ENCODE measurements at regions of chr2 and their contacts with region 1.

Region 1: DNA sequence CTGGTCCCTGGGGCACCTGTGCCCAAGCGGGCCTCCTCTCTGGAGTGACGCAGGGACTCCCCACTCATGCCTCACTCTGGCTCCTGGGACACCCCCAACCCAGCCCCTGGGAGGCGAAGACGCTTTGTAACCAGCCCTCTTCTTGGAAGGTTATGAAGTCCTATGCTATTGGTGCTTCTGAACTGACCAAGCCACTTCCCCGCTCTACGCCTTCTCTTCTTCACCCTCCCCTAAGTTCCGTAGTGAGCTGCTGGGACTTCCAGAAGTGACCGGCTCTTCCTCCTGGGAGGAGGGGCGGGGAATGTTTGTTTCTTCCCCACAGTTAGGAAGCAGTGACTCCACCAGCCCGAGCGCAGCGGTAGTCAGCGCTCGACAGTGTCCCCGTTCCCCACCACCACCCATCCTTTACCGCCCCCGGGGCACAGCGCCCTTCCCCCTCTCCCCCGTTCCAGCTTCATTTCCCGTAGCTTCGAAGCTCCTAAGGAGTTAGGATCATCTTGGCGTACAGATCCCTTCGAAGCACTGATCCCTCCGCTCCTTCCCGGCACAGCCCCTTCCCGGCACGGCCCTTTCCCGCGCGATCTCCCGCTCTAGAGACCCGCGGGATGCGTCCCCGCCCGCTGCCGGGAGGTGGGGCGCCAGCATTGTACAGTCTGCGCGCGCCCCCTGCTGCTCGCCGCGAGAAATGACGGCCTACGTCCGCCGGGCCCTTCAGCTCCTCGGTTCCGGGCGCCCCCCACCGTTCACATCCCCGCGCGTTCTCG is 25.3 kb upstream of the NOTO start:
- DNase-seq: peak; percentile 91
- H3K4me3 Mint-ChIP-seq: peak overlapping the region; percentile 80
- H3K27ac Mint-ChIP-seq: no peak overlapping the region
- H3K4me1 Mint-ChIP-seq: peaks cover 16% of the 10 kb centered on the region
- H3K27me3 Mint-ChIP-seq: peaks cover 80% of the 10 kb centered on the region

Region 2: GRCh38 chr2:72973566-72974435 is 203.3 kb before region 1 on chr2:
- CTCF ChIA-PET with region 1: interaction called, 15 read pairs
- DNase-seq: peak; percentile 62
- H3K4me3 Mint-ChIP-seq: no peak overlapping the region
- H3K27ac Mint-ChIP-seq: no peak overlapping the region
- H3K4me1 Mint-ChIP-seq: no peaks in the 10 kb centered on the region
- H3K27me3 Mint-ChIP-seq: peaks cover 13% of the 10 kb centered on the region

Region 3: GRCh38 chr2:72999729-73000725 is 177.0 kb before region 1 on chr2:
- CTCF ChIA-PET with region 1: interaction called, 41 read pairs
- DNase-seq: no peak
- H3K4me3 Mint-ChIP-seq: no peak overlapping the region
- H3K27ac Mint-ChIP-seq: no peak overlapping the region
- H3K4me1 Mint-ChIP-seq: no peaks in the 10 kb centered on the region
- H3K27me3 Mint-ChIP-seq: no peaks in the 10 kb centered on the region

Region 4: DNA sequence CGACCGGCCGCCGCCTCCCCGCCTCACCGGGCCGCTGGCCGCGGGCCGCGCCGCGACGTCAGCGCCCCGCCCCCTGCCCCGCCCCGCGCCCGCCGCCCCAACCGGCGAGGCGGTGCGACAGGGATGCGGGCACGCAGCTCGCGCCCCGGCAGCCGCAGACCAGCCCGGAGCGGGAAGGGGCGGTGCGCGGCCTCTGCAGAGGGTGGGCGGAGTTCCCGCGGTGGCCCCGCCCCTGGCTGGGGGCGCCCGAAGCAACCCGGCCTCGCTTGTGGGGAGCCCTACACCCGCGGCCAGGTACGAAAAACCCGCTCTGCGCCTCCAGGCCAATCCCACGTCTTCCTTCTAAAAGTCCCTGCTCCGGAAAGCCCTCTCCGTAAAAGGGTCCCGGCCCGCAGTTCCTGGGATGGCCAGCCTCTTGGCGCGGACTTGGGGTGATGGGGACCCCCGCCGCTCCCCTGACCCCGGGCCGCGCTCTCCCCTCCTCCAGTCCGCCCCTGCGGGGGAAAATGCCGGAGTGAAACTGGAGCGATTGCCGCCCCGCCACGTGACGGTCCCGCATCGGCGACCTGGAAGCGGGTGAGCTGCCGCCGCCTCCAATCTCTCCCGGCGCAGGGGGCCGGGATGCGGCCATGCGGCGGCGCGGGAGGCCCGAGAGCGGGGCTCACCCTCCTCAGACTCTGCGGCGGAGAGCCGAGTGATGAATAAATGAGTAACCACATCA is 64.0 kb before region 1 on chr2 and contains the start of gene RAB11FIP5:
- CTCF ChIA-PET with region 1: interaction called, 10 read pairs
- DNase-seq: peak; percentile 79
- H3K4me3 Mint-ChIP-seq: peak within 1 kb of the TSS; percentile 78
- H3K27ac Mint-ChIP-seq: no peak within 1 kb of the TSS
- H3K4me1 Mint-ChIP-seq: peaks cover 21% of the 10 kb centered on the region
- H3K27me3 Mint-ChIP-seq: peaks cover 57% of the 10 kb centered on the region

Region 5: DNA sequence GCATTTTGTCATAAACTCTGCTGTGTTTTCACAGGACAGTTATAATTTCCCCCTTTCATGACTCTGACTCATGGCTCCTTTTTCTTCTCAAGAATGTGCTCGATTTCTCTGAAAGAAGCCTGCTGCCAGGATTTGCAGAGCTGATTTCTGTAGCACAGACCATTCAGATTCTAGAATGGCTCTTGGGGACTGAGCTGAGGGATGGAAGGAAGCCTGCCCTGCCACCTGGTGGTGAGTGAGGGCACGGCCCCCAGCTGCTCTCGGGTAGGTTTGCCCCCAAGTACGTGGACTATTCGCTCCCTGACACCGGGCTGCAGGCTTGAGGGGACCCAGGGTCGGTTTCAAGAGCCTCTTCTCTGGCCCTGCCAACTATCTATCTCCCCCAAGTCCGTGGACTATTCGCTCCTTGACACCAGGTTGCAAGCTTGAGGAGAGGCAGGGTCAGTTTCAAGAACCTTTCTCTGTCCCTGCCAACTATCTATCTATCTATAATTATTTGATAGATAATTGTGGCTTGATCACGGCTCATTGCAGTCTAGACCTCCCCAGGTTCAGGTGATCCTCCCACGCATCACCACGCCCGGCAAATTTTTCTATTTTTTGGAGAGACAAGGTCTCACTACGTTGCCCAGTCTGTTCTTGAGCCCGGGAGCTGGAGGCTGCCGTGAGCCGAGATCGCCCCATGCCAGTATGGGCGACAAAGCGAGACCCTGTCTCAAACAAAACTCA is 35.5 kb after region 1 on chr2:
- CTCF ChIA-PET with region 1: interaction called, 28 read pairs
- DNase-seq: peak; percentile 79
- H3K4me3 Mint-ChIP-seq: no peak overlapping the region
- H3K27ac Mint-ChIP-seq: no peak overlapping the region
- H3K4me1 Mint-ChIP-seq: peaks cover 32% of the 10 kb centered on the region
- H3K27me3 Mint-ChIP-seq: peaks cover 20% of the 10 kb centered on the region

Measured in activated naive CD4-positive, alpha-beta T cell treated with anti-CD3 and anti-CD28 coated beads, Interleukin-2, amount 10 ng/mL, durations not matched to agents 7 days and 5 days (primary cell).